Heart right ventricle (tissue), 16 donors: ENCODE measurements at regions of chr9 and their contacts with region 1.

Region 1: GRCh38 chr9:98962181-98962560 is 18.5 kb downstream of the COL15A1 start:
- DNase-seq: no peak
- ATAC-seq: peak in 5 of 8 donors; percentile 18 to 49 (median 35)
- H3K4me3 ChIP-seq: no peak overlapping the region
- H3K27ac ChIP-seq: peak overlapping the region in 9 of 10 donors; percentile 14 to 90 (median 68)
- H3K4me1 ChIP-seq: peaks cover 11 to 96% (median 54%) of the 10 kb centered on the region in 9 donors
- H3K27me3 ChIP-seq: no peaks in the 10 kb centered on the region
- CTCF ChIP-seq: no peak

Region 2: DNA sequence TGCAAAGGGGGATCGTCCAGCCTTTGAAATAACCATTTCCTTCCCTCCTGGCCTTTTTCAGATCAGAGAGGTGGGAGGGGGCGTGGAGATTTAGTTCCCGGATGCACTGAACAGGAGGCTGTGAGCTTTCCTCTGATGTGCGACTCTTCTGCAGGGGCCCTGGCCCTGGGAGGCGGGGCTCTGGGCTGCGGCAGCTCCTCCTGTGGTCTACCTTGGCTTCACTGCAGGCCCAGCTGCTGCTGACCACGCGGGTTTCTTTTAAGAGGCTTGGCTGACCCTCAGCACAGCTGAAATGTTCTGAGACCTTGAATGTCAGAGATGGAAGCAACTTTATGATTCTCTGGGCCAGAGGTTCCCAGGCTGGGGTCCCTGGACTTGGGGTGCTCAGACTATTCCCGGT is 45.5 kb before region 1 on chr9:
- intact Hi-C with region 1: loop called in 1 of 10 experiments (anchors 5 kb)
- DNase-seq: peak; percentile 59 to 63
- ATAC-seq: peak; percentile 78 to 91 (median 86)
- H3K4me3 ChIP-seq: no peak overlapping the region
- H3K27ac ChIP-seq: peak overlapping the region in 9 of 10 donors; percentile 1 to 92 (median 73)
- H3K4me1 ChIP-seq: peaks cover 10 to 37% (median 24%) of the 10 kb centered on the region in 9 donors
- H3K27me3 ChIP-seq: no peaks in the 10 kb centered on the region
- CTCF ChIP-seq: peak in 3 of 9 donors; percentile 10 to 16 (median 12)

Region 3: GRCh38 chr9:98989036-98990000 is 27.1 kb after region 1 on chr9:
- intact Hi-C with region 1: no loop called
- DNase-seq: peak; percentile 59 to 89
- ATAC-seq: peak; percentile 50 to 88 (median 82)
- H3K4me3 ChIP-seq: no peak overlapping the region
- H3K27ac ChIP-seq: peak overlapping the region in 9 of 10 donors; percentile 43 to 92 (median 64)
- H3K4me1 ChIP-seq: peaks cover 15 to 86% (median 58%) of the 10 kb centered on the region in 9 donors
- H3K27me3 ChIP-seq: no peaks in the 10 kb centered on the region
- CTCF ChIP-seq: peak in 3 of 9 donors; percentile 9 to 33 (median 25)

Region 4: GRCh38 chr9:99019790-99020331 is 57.7 kb after region 1 on chr9:
- intact Hi-C with region 1: no loop called
- DNase-seq: no peak
- ATAC-seq: peak in 5 of 8 donors; percentile 46 to 73 (median 58)
- H3K4me3 ChIP-seq: no peak overlapping the region
- H3K27ac ChIP-seq: peak overlapping the region in 8 of 10 donors; percentile 22 to 75 (median 50)
- H3K4me1 ChIP-seq: peaks cover 0 to 36% (median 13%) of the 10 kb centered on the region in 9 donors
- H3K27me3 ChIP-seq: peaks cover 0 to 8% (median 0%) of the 10 kb centered on the region in 7 donors
- CTCF ChIP-seq: no peak